ENCODE measurements at regions of chr9 and their contacts with region 1.

Region 1: DNA sequence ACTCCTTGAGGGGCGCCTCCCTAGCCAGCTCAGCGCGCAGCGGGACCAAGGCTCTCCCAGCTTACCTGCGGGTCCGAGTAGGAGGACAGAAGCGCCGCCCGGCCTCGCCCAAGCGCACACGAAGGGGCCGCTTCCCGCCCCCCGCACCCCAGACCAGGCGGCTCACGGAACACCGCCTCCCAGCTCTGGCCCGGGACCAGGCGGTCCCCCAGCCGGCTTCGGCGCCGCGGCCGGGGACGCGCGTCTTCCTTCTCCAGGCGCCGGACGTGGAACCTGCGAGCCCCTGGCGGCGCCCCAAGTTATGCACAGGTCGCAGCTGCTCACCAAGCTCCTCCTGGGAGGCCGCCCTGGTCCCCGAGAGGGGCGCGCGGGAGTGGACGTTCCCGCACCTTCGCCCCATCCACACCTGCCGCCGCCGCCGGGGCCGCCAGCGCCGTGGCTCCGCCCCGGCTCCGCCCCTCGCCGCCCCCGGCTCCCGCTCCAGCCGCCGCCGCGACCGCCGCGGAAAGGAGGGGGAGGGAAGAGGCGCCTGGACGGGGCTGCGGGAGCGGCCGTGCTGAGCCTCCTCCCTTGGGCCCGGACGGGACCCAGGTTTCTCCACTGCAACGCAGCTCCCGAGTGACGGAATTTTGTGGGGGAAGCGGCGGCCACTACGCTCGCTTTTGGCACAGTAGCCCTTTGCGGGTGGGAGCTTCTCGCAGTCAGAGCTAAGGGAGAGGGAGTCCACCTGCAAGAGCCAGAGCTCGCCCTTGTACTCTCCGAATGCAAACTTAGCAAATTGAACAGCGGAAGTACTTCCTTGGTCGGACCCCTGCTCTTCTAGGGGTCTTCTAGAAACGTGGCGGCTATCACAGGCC is 77.5 kb upstream of the IFNE start:
- DNase-seq: peak; percentile 52
- H3K4me3 Mint-ChIP-seq: peak overlapping the region; percentile 80
- H3K27ac Mint-ChIP-seq: peak overlapping the region; percentile 95
- H3K4me1 Mint-ChIP-seq: no peaks in the 10 kb centered on the region
- H3K27me3 Mint-ChIP-seq: no peaks in the 10 kb centered on the region
- CTCF ChIP-seq: no peak

Region 2: DNA sequence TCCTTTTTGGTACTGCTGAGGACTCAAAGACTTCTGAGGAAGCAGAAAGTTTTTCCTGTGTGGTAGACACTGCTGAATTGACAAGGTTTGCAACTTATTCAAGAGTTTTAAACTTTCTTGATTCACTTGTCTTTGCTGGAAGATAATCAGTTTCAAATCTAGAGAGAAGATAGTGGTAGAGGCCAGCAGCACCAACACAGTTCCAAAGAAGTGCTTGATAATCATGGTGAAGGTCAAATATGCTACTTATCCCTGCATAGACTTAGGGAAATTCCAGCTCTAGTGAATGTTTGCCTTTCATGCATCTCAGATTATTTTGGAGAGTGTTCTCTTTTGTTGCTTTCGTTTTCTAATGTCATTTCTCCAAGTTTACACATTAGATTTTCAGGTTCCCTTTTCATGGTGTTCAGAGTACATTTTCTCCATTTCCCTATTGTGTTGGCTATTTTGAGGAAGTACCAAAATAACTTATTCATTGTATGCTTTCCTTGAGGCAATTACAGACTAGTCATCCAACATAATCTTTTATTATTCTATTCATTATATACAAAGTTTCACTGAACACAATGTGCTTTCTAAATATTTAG is 78.1 kb before region 1 on chr9:
- CTCF ChIA-PET with region 1: no interaction called
- POLR2A ChIA-PET with region 1: no interaction called
- intact Hi-C with region 1: no loop called
- DNase-seq: no peak
- H3K4me3 Mint-ChIP-seq: no peak overlapping the region
- H3K27ac Mint-ChIP-seq: no peak overlapping the region
- H3K4me1 Mint-ChIP-seq: no peaks in the 10 kb centered on the region
- H3K27me3 Mint-ChIP-seq: no peaks in the 10 kb centered on the region
- CTCF ChIP-seq: no peak

Region 3: GRCh38 chr9:21506626-21507484 is 52.8 kb before region 1 on chr9:
- CTCF ChIA-PET with region 1: no interaction called
- POLR2A ChIA-PET with region 1: interaction called, 3 read pairs
- intact Hi-C with region 1: loop called (anchors 5 kb)
- DNase-seq: peak; percentile 72
- H3K4me3 Mint-ChIP-seq: no peak overlapping the region
- H3K27ac Mint-ChIP-seq: peak overlapping the region; percentile 50
- H3K4me1 Mint-ChIP-seq: peaks cover 7% of the 10 kb centered on the region
- H3K27me3 Mint-ChIP-seq: no peaks in the 10 kb centered on the region
- CTCF ChIP-seq: no peak

Region 4: GRCh38 chr9:21576331-21577189 is 16.9 kb after region 1 on chr9:
- CTCF ChIA-PET with region 1: interaction called, 6 read pairs
- POLR2A ChIA-PET with region 1: interaction called, 48 read pairs
- intact Hi-C with region 1: no loop called
- DNase-seq: peak; percentile 74
- H3K4me3 Mint-ChIP-seq: peak overlapping the region; percentile 71
- H3K27ac Mint-ChIP-seq: peak overlapping the region; percentile 97
- H3K4me1 Mint-ChIP-seq: peaks cover 10% of the 10 kb centered on the region
- H3K27me3 Mint-ChIP-seq: no peaks in the 10 kb centered on the region
- CTCF ChIP-seq: no peak

Region 5: GRCh38 chr9:21688108-21689102 is 128.8 kb after region 1 on chr9:
- CTCF ChIA-PET with region 1: interaction called, 3 read pairs
- POLR2A ChIA-PET with region 1: interaction called, 23 read pairs
- intact Hi-C with region 1: loop called (anchors 5 kb)
- DNase-seq: peak; percentile 66
- H3K4me3 Mint-ChIP-seq: peak overlapping the region; percentile 63
- H3K27ac Mint-ChIP-seq: peak overlapping the region; percentile 95
- H3K4me1 Mint-ChIP-seq: peaks cover 21% of the 10 kb centered on the region
- H3K27me3 Mint-ChIP-seq: no peaks in the 10 kb centered on the region
- CTCF ChIP-seq: no peak

Region 6: DNA sequence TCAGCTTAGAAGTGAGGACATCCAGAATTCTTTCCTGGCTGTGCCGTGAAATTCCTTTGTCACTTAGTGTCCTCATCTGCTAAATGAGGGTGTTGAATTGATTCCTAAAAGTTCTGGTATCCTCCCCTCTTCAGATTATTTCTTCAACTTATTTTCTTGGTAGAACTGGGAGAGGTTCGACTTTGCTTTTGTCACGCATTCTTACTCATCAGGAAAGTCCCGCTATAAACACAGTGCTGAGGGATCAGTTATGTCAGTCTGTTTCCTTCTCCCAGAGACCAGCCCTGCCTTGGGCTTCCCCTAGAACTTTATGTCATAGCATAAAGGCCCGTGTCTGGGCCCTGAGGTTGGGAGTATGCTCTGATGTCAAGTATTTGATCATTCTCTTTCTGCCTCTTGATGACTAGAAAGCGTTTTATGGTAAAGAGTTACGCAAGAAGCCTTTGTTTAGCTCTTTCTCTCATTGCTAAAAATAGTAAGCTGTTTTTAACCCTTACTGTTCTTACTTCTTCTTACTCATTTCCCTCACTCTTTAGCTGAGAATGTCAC is 272.4 kb after region 1 on chr9:
- CTCF ChIA-PET with region 1: no interaction called
- POLR2A ChIA-PET with region 1: interaction called, 3 read pairs
- intact Hi-C with region 1: loop called (anchors 10 kb)
- DNase-seq: peak; percentile 79
- H3K4me3 Mint-ChIP-seq: no peak overlapping the region
- H3K27ac Mint-ChIP-seq: peak overlapping the region; percentile 96
- H3K4me1 Mint-ChIP-seq: peaks cover 28% of the 10 kb centered on the region
- H3K27me3 Mint-ChIP-seq: no peaks in the 10 kb centered on the region
- CTCF ChIP-seq: no peak

Region 7: DNA sequence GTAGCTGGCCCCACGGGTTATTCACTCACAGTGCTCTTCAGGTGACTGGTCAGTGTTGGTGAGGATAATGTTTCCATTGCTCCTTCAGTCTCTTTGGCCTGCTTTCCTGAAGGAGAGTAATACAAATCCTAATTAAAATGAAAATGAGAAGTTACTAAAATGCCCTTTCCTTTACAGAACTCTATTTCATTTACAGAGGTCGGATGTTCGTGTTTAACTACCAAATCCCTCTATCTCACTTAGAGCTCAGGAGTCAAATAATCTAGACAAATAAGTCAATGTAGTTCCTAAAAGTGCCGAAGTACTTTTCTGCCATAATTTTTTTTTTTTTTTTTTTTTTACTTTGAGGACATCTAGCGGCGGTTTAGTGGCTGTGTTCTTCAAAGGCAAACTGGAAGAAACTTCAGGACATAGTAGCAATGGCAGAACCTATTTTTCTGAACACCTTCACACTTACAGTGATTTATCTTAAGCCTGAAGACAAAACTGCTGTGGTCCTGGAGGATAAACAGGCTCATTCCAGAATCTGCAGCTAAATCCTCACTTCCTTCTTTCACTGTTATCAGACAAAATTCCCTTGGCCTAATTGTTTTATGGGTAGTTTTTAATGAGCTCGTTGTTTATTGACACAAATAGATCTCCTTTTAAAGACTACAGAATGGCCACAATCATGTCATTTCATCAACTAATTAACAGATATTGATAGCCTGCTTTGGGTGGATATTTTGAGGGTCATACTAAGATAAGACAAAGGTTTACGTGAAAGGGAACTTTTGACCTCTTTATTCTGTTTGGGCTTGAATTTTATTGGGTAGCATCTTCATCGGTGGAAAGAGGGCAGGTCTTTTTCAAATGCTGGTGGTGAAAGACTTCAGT is 679.4 kb after region 1 on chr9:
- CTCF ChIA-PET with region 1: interaction called, 8 read pairs
- POLR2A ChIA-PET with region 1: interaction called, 8 read pairs
- intact Hi-C with region 1: loop called (anchors 1 kb)
- DNase-seq: peak; percentile 33
- H3K4me3 Mint-ChIP-seq: peak overlapping the region; percentile 50
- H3K27ac Mint-ChIP-seq: peak overlapping the region; percentile 86
- H3K4me1 Mint-ChIP-seq: peaks cover 37% of the 10 kb centered on the region
- H3K27me3 Mint-ChIP-seq: no peaks in the 10 kb centered on the region
- CTCF ChIP-seq: no peak

Measured in MCF 10A (cell line).